ENCODE measurements at regions of chr12 and their contacts with region 1.

Region 1: GRCh38 chr12:129193263-129193871 is 340.1 kb downstream of the GLT1D1 start:
- DNase-seq: peak; percentile 48
- H3K4me3 ChIP-seq: no peak overlapping the region
- H3K27ac ChIP-seq: no peak overlapping the region
- H3K4me1 ChIP-seq: no peaks in the 10 kb centered on the region
- H3K27me3 ChIP-seq: no peaks in the 10 kb centered on the region
- CTCF ChIP-seq: peak; percentile 58

Region 2: GRCh38 chr12:129208566-129208965 is 15.2 kb after region 1 on chr12:
- intact Hi-C with region 1: loop called (anchors 2 kb)
- DNase-seq: no peak
- H3K4me3 ChIP-seq: no peak overlapping the region
- H3K27ac ChIP-seq: no peak overlapping the region
- H3K4me1 ChIP-seq: no peaks in the 10 kb centered on the region
- H3K27me3 ChIP-seq: no peaks in the 10 kb centered on the region
- CTCF ChIP-seq: no peak